Left ventricle myocardium superior (tissue), 1 donor: ENCODE measurements at regions of chr1 and their contacts with region 1.

Region 1: GRCh38 chr1:42340093-42340684 is 5.2 kb upstream of the FOXJ3 start:
- DNase-seq: no peak
- ATAC-seq: no peak

Region 2: DNA sequence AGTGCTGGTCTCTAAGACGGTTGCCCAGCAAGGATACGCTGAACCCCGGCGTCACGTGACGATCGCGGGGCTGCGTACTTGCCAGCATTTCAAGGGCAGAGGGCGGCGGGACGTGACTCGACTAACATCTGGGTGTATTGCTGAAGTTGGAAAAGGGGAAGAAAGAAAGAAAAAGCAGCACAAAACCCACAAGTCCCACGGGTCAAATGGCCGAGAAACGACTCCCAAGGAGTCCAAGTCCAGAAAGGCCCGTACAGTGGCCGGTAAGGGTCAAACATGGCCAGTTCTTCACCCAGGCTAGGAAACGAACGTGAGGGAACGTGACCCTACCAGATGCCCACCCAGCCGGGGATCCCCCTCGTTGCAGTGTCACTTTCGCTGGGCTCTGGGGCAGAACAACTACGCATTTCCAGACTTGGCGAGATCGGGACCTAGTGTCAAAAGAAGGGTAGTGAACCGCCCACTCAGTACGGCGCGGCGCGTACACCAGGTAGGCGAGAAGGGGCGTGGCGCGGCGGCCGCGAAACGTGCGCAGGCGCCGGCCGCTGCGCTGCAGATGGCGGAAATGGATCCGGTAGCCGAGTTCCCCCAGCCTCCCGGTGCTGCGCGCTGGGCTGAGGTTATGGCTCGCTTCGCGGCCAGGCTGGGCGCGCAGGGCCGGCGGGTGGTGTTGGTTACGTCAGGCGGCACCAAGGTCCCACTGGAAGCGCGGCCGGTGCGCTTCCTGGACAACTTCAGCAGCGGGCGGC is 116.0 kb after region 1 on chr1 and contains the starts of genes PPCS and ZMYND12:
- intact Hi-C with region 1: loop called (anchors 10 kb)
- DNase-seq: peak; percentile 94
- ATAC-seq: peak; percentile 97
- total RNA-seq, gene PPCS: 31.1 TPM
- total RNA-seq, gene ZMYND12: 0.84 TPM